CD4-positive, alpha-beta memory T cell (primary cell): ENCODE measurements at regions of chr11 and their contacts with region 1.

Region 1: GRCh38 chr11:118227865-118228785 is 3.3 kb upstream of the JAML start:
- DNase-seq: peak in 4 of 5 donors; percentile 51 to 67 (median 62)
- H3K4me3 ChIP-seq: peak overlapping the region in 1 of 2 donors; percentile 5
- H3K4me3 Mint-ChIP-seq: peak overlapping the region in 7 of 8 donors; percentile 22 to 79 (median 78)
- H3K27ac ChIP-seq: peak overlapping the region; percentile 58
- H3K27ac Mint-ChIP-seq: peak overlapping the region in 2 of 7 donors; percentile 94 to 95
- H3K4me1 ChIP-seq: peaks cover 84% of the 10 kb centered on the region
- H3K4me1 Mint-ChIP-seq: peaks cover 25 to 54% (median 39%) of the 10 kb centered on the region in 4 donors
- H3K27me3 ChIP-seq: no peaks in the 10 kb centered on the region
- H3K27me3 Mint-ChIP-seq: no peaks in the 10 kb centered on the region

Region 2: DNA sequence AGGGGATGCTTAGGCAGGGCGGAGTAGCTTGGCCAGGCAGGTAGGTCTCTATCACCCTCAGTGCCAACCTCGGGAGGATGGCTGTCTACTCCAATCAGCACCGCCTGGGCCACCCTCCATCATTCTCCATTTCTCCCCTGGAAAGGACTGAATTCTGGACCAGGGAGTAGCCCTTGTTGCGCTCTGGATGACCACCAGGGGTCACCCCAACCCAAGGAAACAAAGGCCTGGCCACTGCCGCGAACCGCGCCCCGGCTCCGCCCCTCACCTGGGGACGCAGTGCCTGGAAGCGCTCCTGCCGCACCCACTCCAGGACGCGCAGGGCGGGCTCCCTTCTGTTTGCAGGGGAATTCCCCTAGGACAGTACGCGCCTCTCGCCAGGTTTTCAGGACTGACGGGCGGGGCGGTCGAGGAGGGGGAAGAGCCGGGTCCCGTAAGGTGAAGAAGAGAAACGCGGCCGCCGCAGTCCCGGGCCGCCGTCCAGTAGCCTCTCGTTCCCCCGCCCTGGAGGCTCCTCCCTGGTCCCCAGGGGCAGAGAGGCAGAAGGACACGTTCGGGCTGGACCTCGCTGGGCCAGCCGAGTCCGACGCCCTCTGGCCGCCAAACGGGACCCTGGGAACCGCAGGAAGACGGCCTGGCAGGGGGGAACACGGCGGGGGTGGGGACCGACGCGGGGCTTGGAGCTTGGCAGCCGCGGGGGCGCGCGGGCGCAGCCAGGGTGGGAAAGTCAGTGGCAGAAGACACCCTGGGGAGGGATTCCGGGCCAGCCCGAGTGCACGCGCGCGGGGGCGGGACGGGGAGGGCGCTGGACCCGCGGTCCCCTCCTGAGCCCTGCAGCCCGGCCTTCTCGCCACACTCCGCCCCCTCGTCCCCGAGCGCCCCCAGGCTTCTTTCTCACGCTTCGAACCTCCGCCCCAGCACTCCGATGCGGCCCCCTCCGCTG is 82.6 kb before region 1 on chr11:
- CTCF ChIA-PET with region 1: no interaction called
- POLR2A ChIA-PET with region 1: no interaction called
- intact Hi-C with region 1: no loop called
- DNase-seq: peak; percentile 81 to 90 (median 86)
- H3K4me3 ChIP-seq: peak overlapping the region; percentile 43 to 62
- H3K4me3 Mint-ChIP-seq: peak overlapping the region; percentile 63 to 93 (median 85)
- H3K27ac ChIP-seq: no peak overlapping the region
- H3K27ac Mint-ChIP-seq: peak overlapping the region in 4 of 7 donors; percentile 41 to 88 (median 78)
- H3K4me1 ChIP-seq: peaks cover 4% of the 10 kb centered on the region
- H3K4me1 Mint-ChIP-seq: peaks cover 2 to 5% (median 4%) of the 10 kb centered on the region in 4 donors
- H3K27me3 ChIP-seq: peaks cover 13% of the 10 kb centered on the region
- H3K27me3 Mint-ChIP-seq: peaks cover 34 to 46% of the 10 kb centered on the region in 2 donors

Region 3: DNA sequence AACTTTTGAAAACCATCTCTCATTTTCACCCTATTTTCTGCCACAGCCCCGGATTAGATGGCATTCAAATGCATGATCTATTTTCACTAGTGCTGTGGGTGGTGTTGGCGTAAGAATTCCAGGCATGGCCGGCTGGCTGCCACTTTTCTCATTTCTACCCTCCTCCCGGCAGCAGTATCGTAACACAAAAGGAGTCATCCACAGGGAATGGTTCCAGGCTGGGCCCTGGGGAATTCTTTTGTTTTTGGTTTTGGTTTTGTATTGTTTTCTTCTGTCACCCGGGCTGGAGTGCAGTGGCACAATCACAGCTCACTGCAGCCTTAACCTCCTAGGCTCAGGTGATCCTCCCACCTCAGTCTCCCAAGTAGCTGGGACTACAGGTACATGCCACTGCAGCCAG is 17.1 kb before region 1 on chr11:
- CTCF ChIA-PET with region 1: interaction called, 18 read pairs
- POLR2A ChIA-PET with region 1: interaction called, 71 read pairs
- intact Hi-C with region 1: loop called (anchors 2 kb)
- DNase-seq: no peak
- H3K4me3 ChIP-seq: no peak overlapping the region
- H3K4me3 Mint-ChIP-seq: no peak overlapping the region
- H3K27ac ChIP-seq: no peak overlapping the region
- H3K27ac Mint-ChIP-seq: peak overlapping the region in 2 of 7 donors; percentile 19 to 68
- H3K4me1 ChIP-seq: peaks cover 44% of the 10 kb centered on the region
- H3K4me1 Mint-ChIP-seq: peaks cover 44 to 57% (median 51%) of the 10 kb centered on the region in 4 donors
- H3K27me3 ChIP-seq: no peaks in the 10 kb centered on the region
- H3K27me3 Mint-ChIP-seq: no peaks in the 10 kb centered on the region

Region 4: DNA sequence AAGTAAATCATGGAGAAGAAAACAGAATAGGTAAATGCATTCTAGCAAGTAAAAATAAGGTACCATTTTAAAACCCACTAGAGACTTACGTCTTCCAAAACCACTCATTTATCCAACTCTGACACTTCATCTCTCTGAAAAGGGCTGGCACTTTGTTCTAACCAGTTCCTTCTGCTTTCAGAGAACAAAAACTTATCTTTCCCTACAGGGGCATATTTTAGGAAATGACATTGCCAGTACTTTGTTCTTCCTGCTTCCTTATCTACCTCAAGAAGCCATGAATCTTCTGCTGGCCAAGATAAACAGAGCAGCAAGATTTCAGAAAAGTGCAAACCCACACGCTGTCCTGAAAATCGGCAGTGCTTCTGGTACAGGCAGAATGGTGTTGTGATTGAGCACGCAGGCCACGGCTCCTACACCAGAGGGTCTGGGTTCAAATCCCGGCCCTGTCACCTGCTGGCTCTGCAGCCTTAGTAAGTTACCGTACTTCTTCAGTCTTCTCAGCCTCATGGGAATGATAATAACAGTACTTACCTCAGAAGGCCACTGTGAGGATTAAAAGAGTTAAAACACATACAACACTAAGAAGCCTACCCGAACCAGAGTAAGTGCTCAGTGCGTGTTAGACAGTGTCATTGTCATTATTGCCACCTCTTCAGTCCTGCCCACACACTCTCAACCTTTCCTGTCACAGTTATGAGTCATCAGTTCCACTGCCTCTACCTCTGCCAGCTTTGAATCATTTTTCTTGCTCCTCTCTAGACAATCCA is 13.1 kb after region 1 on chr11:
- CTCF ChIA-PET with region 1: interaction called, 38 read pairs
- POLR2A ChIA-PET with region 1: interaction called, 142 read pairs
- intact Hi-C with region 1: loop called (anchors 1 kb)
- DNase-seq: peak; percentile 59 to 91 (median 67)
- H3K4me3 ChIP-seq: peak overlapping the region in 1 of 2 donors; percentile 21
- H3K4me3 Mint-ChIP-seq: peak overlapping the region; percentile 46 to 79 (median 72)
- H3K27ac ChIP-seq: peak overlapping the region; percentile 65
- H3K27ac Mint-ChIP-seq: peak overlapping the region; percentile 87 to 98 (median 93)
- H3K4me1 ChIP-seq: peaks cover 68% of the 10 kb centered on the region
- H3K4me1 Mint-ChIP-seq: peaks cover 64 to 83% (median 74%) of the 10 kb centered on the region in 4 donors
- H3K27me3 ChIP-seq: no peaks in the 10 kb centered on the region
- H3K27me3 Mint-ChIP-seq: no peaks in the 10 kb centered on the region

Region 5: DNA sequence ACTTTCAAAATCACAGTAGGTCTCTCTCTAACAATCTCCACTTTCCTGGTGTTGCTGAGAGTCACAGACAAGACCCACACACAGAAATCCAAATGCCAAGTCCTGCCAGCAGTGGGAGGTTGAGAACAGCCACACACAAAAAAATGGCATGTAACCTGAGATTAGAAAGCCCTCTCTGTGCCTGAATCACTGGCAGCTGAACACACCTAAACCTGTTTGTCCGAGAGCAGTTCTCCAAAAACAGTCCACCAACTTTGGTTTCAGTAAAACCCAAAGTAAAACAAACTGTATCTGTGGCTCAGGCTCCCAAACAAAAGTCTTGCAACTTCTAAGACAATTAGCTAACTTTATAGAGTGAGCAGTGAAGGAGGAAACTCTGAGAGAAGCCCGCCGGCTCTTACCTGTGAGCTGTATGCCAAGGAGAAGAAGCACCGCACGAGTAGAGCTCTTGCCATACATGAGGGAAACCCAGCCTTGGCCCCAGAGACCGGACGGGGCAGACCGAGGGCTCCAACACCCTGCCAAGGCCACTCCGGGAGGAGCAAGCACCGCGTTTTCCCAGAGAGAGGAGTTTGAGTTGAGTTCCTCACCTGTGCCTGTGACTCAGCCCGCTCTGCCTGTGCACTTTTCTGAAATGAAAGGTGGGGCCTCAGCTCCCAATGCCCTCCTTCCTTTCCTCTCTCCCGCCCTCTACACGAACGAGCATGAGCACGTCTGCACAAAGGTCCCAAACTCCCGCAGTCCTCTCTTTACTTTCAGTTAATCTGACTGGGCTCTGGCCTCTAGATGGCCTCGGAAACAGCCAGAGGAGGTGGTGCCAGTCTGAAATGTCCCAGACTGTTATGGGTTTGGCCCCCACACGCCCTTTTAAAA is 35.8 kb after region 1 on chr11 and contains the start of gene MPZL2:
- CTCF ChIA-PET with region 1: interaction called, 11 read pairs
- POLR2A ChIA-PET with region 1: interaction called, 6 read pairs
- intact Hi-C with region 1: no loop called
- DNase-seq: peak in 1 of 5 donors; percentile 48
- H3K4me3 ChIP-seq: peak within 1 kb of the TSS in 1 of 2 donors; percentile 13
- H3K4me3 Mint-ChIP-seq: peak within 1 kb of the TSS; percentile 61 to 89 (median 84)
- H3K27ac ChIP-seq: no peak within 1 kb of the TSS
- H3K27ac Mint-ChIP-seq: peak within 1 kb of the TSS in 6 of 7 donors; percentile 39 to 89 (median 74)
- H3K4me1 ChIP-seq: peaks cover 29% of the 10 kb centered on the region
- H3K4me1 Mint-ChIP-seq: peaks cover 11 to 44% (median 23%) of the 10 kb centered on the region in 4 donors
- H3K27me3 ChIP-seq: no peaks in the 10 kb centered on the region
- H3K27me3 Mint-ChIP-seq: peaks cover 0 to 1% of the 10 kb centered on the region in 2 donors
- total RNA-seq, gene MPZL2: 2.9 to 3.7 TPM

Region 6: DNA sequence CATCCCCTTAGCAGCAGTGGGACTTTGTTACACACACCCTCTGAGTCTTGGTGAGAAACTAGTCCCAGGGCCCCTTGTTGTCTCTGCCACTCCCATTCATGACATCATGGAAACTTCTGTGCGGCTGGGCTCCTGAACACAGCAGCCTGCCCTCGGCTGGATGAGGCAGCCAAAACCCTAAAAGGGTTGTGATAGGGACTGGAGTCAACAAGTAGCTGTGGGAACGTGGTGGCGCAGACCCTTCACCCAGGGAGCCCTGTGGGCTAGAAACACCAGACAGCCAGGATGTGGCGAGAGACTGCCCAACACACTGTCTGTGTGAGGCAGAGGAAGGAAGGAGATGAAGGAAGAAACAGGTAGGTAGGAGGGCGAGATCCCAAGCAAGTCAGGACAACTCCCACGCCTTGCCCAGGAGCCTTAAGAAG is 110.5 kb after region 1 on chr11:
- CTCF ChIA-PET with region 1: interaction called, 3 read pairs
- POLR2A ChIA-PET with region 1: interaction called, 17 read pairs
- intact Hi-C with region 1: no loop called
- DNase-seq: peak; percentile 87 to 98 (median 90)
- H3K4me3 ChIP-seq: peak overlapping the region; percentile 89 to 97
- H3K4me3 Mint-ChIP-seq: peak overlapping the region; percentile 91 to 100 (median 97)
- H3K27ac ChIP-seq: peak overlapping the region; percentile 93
- H3K27ac Mint-ChIP-seq: peak overlapping the region; percentile 98 to 100 (median 99)
- H3K4me1 ChIP-seq: peaks cover 75% of the 10 kb centered on the region
- H3K4me1 Mint-ChIP-seq: peaks cover 32 to 79% (median 55%) of the 10 kb centered on the region in 4 donors
- H3K27me3 ChIP-seq: no peaks in the 10 kb centered on the region
- H3K27me3 Mint-ChIP-seq: peaks cover 0 to 1% of the 10 kb centered on the region in 2 donors

Region 7: GRCh38 chr11:119236490-119236889 is 1008.4 kb after region 1 on chr11:
- CTCF ChIA-PET with region 1: no interaction called
- POLR2A ChIA-PET with region 1: no interaction called
- intact Hi-C with region 1: no loop called
- DNase-seq: no peak
- H3K4me3 ChIP-seq: no peak overlapping the region
- H3K4me3 Mint-ChIP-seq: no peak overlapping the region
- H3K27ac ChIP-seq: no peak overlapping the region
- H3K27ac Mint-ChIP-seq: peak overlapping the region in 2 of 7 donors; percentile 22 to 23
- H3K4me1 ChIP-seq: peaks cover 33% of the 10 kb centered on the region
- H3K4me1 Mint-ChIP-seq: peaks cover 30 to 54% (median 39%) of the 10 kb centered on the region in 4 donors
- H3K27me3 ChIP-seq: no peaks in the 10 kb centered on the region
- H3K27me3 Mint-ChIP-seq: no peaks in the 10 kb centered on the region